ENCODE measurements at regions of chr10 and their contacts with region 1.

Region 1: GRCh38 chr10:22003079-22003913 is at the start of gene DNAJC1:
- DNase-seq: peak; percentile 99
- H3K4me3 ChIP-seq: peak within 1 kb of the TSS; percentile 72 to 97 (median 89)
- H3K27ac ChIP-seq: peak within 1 kb of the TSS; percentile 90 to 95 (median 93)
- H3K4me1 ChIP-seq: peaks cover 0 to 9% of the 10 kb centered on the region in 2 donors
- H3K27me3 ChIP-seq: no peaks in the 10 kb centered on the region
- CTCF ChIP-seq: peak in 3 of 6 experiments; percentile 10 to 35 (median 10)
- POLR2A ChIP-seq: peak; percentile 88 to 98
- total RNA-seq, gene DNAJC1: 73.4 to 157 (median 95.6) TPM

Region 2: DNA sequence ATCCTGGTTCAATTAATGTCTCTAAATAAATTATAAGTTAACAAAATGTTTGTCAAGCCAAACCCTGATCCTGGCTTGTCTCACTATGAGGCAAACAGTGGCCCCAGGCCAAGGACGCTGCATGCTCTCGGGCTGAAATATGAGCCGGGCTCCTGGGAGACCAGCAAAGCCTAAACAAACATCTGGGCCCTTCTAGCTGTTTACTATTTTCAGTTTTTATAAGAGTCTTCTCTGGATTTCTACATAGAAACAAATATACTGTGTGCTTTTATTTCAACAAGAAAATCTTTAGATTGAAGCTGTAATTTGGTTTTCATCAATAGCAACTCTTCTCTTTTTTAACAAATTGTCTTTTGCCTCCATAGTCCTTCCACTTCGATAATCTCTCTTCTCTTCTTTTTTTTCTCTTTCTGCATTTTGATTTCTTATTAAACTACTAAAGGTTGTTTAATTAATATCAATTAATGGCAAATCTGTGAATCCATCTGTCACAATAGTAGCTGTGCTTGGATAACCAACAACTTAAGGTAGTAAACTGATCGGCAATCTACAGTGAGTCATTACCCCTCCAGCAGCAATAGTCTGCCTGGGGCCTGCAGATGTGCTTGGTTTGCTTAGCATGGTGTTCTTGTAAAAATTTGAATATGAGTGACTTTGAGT is 83.6 kb after region 1 on chr10:
- intact Hi-C with region 1: no loop called
- DNase-seq: peak; percentile 93 to 98
- H3K4me3 ChIP-seq: no peak overlapping the region
- H3K27ac ChIP-seq: peak overlapping the region; percentile 42 to 86 (median 85)
- H3K4me1 ChIP-seq: peaks cover 0 to 17% of the 10 kb centered on the region in 2 donors
- H3K27me3 ChIP-seq: no peaks in the 10 kb centered on the region
- CTCF ChIP-seq: no peak
- POLR2A ChIP-seq: no peak

Region 3: GRCh38 chr10:22133749-22134624 is 130.7 kb after region 1 on chr10:
- intact Hi-C with region 1: no loop called
- DNase-seq: no peak
- H3K4me3 ChIP-seq: no peak overlapping the region
- H3K27ac ChIP-seq: no peak overlapping the region
- H3K4me1 ChIP-seq: no peaks in the 10 kb centered on the region
- H3K27me3 ChIP-seq: no peaks in the 10 kb centered on the region
- CTCF ChIP-seq: no peak
- POLR2A ChIP-seq: no peak

Region 4: GRCh38 chr10:22244001-22244400 is 240.7 kb after region 1 on chr10:
- intact Hi-C with region 1: loop called (anchors 10 kb)
- DNase-seq: no peak
- H3K4me3 ChIP-seq: no peak overlapping the region
- H3K27ac ChIP-seq: no peak overlapping the region
- H3K4me1 ChIP-seq: no peaks in the 10 kb centered on the region
- H3K27me3 ChIP-seq: no peaks in the 10 kb centered on the region
- CTCF ChIP-seq: peak in 1 of 6 experiments; percentile 11
- POLR2A ChIP-seq: no peak

Region 5: GRCh38 chr10:22325272-22326144 is 322.2 kb after region 1 on chr10:
- intact Hi-C with region 1: loop called (anchors 10 kb)
- DNase-seq: peak; percentile 67 to 69
- H3K4me3 ChIP-seq: peak overlapping the region in 1 of 3 donors; percentile 34
- H3K27ac ChIP-seq: peak overlapping the region in 2 of 3 donors; percentile 22 to 47
- H3K4me1 ChIP-seq: peaks cover 13 to 20% of the 10 kb centered on the region in 2 donors
- H3K27me3 ChIP-seq: peaks cover 2% of the 10 kb centered on the region
- CTCF ChIP-seq: no peak
- POLR2A ChIP-seq: no peak

Measured in thyroid gland (tissue), 4 donors.